ENCODE measurements at regions of chr15 and their contacts with region 1.

Region 1: DNA sequence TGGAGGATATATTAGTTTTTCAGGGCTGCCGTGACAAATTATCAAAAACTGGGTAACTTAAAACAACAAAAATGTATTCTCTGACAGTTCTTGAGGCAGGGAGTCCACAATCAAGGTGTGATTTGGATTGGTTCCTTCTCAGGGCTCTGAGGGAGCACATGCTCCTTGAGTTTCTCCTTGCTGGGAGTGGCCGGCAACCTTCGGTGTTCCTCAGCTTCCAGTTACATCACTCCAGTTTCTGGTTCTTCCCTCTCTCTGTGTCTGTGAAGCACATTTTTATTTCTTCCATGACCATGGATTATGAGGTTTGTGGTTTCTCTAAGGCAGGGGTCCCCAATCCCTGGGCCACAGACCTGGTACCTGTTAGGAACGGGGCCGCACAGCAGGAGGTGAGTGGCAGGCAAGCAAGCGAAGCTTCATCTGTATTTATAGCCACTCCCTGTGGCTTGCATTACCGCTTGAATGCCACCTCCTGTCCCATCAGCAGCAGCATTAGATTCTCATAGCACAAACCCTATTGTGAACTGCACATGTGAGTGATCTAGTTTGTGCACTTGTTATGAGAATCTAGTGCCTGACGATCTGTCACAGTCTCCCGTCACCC is 24.3 kb downstream of the LRRC28 start:
- DNase-seq: no peak
- H3K4me3 ChIP-seq: no peak overlapping the region
- H3K27ac ChIP-seq: no peak overlapping the region
- H3K4me1 ChIP-seq: no peaks in the 10 kb centered on the region
- H3K27me3 ChIP-seq: no peaks in the 10 kb centered on the region
- CTCF ChIP-seq: no peak
- EP300 ChIP-seq: no peak
- POLR2A ChIP-seq: no peak

Region 2: DNA sequence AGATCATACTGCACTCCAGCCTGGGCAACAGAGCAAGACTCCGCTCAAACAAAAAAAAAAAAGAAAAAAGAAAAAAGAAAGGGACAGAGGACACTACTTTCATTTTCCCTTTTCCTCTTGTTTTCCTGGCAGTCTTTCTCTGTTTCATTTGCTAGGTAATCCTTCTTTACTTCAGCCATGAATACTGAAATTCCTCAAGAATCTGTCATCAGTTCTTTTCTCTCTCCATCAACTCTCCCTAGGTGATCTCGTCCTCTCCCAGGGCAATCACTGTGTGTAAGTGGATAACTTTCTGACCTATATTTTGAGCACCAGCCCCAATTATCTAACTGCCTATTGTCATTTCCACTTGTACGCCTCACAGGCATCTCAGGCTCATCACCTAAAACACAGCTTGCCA is 77.8 kb before region 1 on chr15:
- intact Hi-C with region 1: no loop called
- DNase-seq: no peak
- H3K4me3 ChIP-seq: no peak overlapping the region
- H3K27ac ChIP-seq: no peak overlapping the region
- H3K4me1 ChIP-seq: no peaks in the 10 kb centered on the region
- H3K27me3 ChIP-seq: no peaks in the 10 kb centered on the region
- CTCF ChIP-seq: no peak
- EP300 ChIP-seq: no peak
- POLR2A ChIP-seq: no peak

Region 3: GRCh38 chr15:99704444-99704838 is 428.8 kb after region 1 on chr15:
- intact Hi-C with region 1: loop called in 2 of 4 experiments (anchors 10 kb)
- DNase-seq: peak in 1 of 5 donors; percentile 50
- H3K4me3 ChIP-seq: no peak overlapping the region
- H3K27ac ChIP-seq: peak overlapping the region in 1 of 2 donors; percentile 56
- H3K4me1 ChIP-seq: peaks cover 8% of the 10 kb centered on the region
- H3K27me3 ChIP-seq: no peaks in the 10 kb centered on the region
- CTCF ChIP-seq: peak; percentile 30 to 85 (median 81)
- EP300 ChIP-seq: no peak
- POLR2A ChIP-seq: no peak

Region 4: GRCh38 chr15:99729920-99730319 is 454.3 kb after region 1 on chr15:
- intact Hi-C with region 1: loop called in 1 of 4 experiments (anchors 10 kb)
- DNase-seq: peak in 4 of 5 donors; percentile 43 to 50 (median 48)
- H3K4me3 ChIP-seq: no peak overlapping the region
- H3K27ac ChIP-seq: no peak overlapping the region
- H3K4me1 ChIP-seq: peaks cover 4% of the 10 kb centered on the region
- H3K27me3 ChIP-seq: no peaks in the 10 kb centered on the region
- CTCF ChIP-seq: peak in 1 of 3 donors; percentile 9
- EP300 ChIP-seq: no peak
- POLR2A ChIP-seq: no peak

Region 5: DNA sequence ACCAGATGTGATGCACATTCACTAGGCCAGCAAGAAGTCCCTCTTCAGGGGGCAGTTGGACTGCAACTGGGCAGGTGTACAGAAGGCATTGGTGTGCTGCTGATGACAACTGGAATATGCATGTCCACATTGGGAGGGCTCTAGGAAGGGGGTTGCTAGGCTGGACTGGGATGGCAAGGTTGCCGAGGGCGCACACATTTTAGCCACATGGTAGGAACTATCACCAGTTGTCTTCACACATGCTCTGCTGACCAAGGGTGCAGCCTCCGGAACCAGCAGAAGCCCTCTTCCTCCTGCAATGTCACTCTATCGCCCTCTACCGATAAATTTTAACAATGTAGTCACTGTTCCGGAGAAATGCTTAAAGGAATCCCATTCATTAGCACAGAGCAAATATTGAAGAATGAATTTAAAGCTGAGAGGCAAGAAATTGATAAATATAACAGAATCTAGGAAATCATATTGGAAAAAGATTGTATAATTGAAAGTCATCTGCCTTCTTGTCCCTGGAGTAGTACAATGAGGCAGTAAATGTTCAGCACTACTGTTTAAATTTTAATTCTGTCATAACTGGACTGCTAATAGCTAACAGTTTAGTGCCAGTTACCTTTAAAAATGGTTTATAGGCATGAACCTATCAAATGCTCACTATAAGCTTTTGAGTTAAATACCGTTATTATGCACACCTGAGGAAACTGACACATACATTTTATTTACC is 480.2 kb after region 1 on chr15:
- intact Hi-C with region 1: loop called in 1 of 4 experiments (anchors 10 kb)
- DNase-seq: peak; percentile 30 to 52 (median 50)
- H3K4me3 ChIP-seq: no peak overlapping the region
- H3K27ac ChIP-seq: no peak overlapping the region
- H3K4me1 ChIP-seq: no peaks in the 10 kb centered on the region
- H3K27me3 ChIP-seq: no peaks in the 10 kb centered on the region
- CTCF ChIP-seq: peak; percentile 64 to 77 (median 68)
- EP300 ChIP-seq: no peak
- POLR2A ChIP-seq: no peak

Measured in ovary (tissue), 10 donors.